Vagina (tissue), 2 donors: ENCODE measurements at regions of chr7 and their contacts with region 1.

Region 1: DNA sequence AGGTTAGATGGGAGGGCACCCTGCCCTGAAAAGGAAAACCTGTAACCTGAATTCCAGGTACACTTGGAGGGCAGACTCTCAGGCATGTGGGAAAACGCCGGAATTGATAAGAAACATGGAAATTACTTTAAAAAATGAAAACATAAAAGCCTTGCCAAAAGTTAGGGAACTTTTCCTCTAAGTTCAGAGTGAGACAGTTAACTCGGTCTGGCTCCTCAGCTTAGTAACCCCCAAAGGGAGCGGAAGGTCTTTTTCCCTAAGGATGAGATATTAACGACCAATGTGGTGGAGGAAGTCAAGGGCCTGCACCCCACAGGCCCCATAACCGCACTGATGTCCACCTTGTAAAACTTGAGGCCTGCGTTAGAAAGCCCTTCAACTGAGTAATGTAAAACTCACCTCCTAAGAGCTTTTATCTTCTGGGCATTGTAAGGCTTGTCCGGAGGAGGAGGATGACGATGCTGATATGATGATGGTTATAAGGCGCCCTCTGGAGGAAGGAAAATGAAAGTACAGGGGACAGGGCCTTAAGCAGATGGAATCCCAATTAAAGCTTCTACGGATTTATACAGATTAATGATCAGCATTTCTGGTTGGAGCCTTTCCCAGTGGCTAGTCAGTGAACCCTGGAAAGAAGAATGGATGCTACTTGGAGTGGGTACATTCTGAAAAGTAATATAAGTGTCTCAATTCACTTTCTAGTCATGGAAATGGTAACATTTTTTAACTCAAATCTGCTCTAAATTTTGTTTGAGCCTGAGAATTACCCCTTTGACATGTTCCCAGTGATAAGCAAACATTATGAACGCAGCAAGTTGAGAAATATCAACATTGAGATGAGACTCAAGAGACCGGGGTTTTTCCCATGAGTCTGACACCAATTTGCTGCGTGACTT is 694 bp downstream of the COL1A2 start:
- DNase-seq: no peak
- H3K4me3 ChIP-seq: peak overlapping the region; percentile 62 to 67
- H3K27ac ChIP-seq: peak overlapping the region; percentile 95
- H3K4me1 ChIP-seq: peaks cover 25% of the 10 kb centered on the region
- H3K27me3 ChIP-seq: no peaks in the 10 kb centered on the region
- CTCF ChIP-seq: peak in 2 of 3 experiments; percentile 56 to 78
- POLR2A ChIP-seq: no peak

Region 2: GRCh38 chr7:94276795-94277194 is 118.6 kb before region 1 on chr7:
- intact Hi-C with region 1: no loop called
- DNase-seq: no peak
- H3K4me3 ChIP-seq: no peak overlapping the region
- H3K27ac ChIP-seq: no peak overlapping the region
- H3K4me1 ChIP-seq: no peaks in the 10 kb centered on the region
- H3K27me3 ChIP-seq: no peaks in the 10 kb centered on the region
- CTCF ChIP-seq: no peak
- POLR2A ChIP-seq: no peak

Region 3: DNA sequence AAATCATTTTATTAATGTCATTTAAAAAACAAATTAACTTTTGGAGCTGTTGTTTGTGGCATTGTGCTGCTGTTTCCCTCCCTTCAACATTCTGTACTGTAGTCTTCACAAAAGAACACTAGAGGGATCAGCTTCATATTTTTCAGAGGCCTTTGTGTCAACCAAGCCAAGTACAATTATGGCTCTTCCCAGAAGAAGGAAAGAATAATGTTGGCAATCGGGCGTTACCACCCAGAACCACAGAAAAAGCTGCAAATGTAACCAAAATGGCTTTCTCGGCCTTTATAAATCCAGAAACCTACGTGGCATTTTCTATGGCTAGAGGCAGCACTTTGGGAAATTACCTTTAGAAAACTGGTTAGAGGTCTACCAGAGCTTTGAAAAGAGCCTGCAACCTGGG is 99.5 kb before region 1 on chr7:
- intact Hi-C with region 1: loop called (anchors 2 kb)
- DNase-seq: no peak
- H3K4me3 ChIP-seq: peak overlapping the region in 1 of 2 donors; percentile 10
- H3K27ac ChIP-seq: peak overlapping the region; percentile 94
- H3K4me1 ChIP-seq: peaks cover 27% of the 10 kb centered on the region
- H3K27me3 ChIP-seq: no peaks in the 10 kb centered on the region
- CTCF ChIP-seq: peak; percentile 2 to 59 (median 22)
- POLR2A ChIP-seq: no peak